ENCODE measurements at regions of chr12 and their contacts with region 1.

Region 1: GRCh38 chr12:109369831-109370230 is 22.1 kb downstream of the MYO1H start:
- DNase-seq: no peak
- H3K4me3 ChIP-seq: no peak overlapping the region
- H3K27ac ChIP-seq: no peak overlapping the region
- H3K27me3 ChIP-seq: peaks cover 3% of the 10 kb centered on the region
- CTCF ChIP-seq: no peak

Region 2: GRCh38 chr12:107992029-107992428 is 1377.8 kb before region 1 on chr12:
- CTCF ChIA-PET with region 1: interaction called, 13 read pairs
- POLR2A ChIA-PET with region 1: no interaction called
- DNase-seq: no peak
- H3K4me3 ChIP-seq: no peak overlapping the region
- H3K27ac ChIP-seq: no peak overlapping the region
- H3K27me3 ChIP-seq: no peaks in the 10 kb centered on the region
- CTCF ChIP-seq: no peak

Region 3: DNA sequence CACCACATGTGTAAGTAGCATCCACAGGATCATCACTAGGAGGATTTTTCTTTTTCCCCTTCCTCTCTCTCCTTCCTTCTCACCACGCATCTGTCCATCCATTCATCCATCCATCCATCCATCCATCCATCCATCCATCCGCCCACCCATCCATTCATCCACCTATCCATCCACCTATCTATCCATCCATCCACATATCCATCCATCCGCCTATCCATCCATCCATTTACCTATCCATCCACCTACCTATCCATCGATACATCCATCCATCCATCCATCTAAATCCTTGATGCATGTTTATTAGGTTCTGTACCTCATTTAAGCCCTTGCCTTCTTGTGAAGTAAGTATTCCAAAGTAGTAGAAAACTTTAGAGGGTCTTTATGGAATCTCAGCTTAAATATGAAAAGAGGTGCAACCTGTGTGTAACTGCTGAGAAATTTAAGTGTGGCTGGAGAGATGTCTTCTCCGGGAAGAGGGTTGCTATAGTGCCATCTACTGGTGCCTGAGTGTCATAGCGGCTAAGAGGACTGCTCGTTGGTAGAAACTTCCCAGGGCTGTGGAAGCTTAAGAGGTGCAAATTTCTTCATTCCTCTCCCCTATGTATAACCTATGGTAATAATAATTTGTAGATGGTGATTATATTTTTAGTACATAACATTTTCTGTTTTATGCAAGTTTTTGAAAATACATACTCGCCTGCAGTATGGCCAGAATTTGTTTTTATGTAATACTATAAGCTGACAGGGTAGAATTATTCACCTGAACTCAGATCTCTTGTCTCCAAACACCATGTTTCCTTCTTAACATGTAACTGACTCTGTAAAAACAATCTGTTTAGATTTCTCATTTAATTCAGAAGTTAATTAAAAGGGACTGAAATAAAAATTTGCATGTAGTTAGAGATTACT is 23.9 kb after region 1 on chr12:
- CTCF ChIA-PET with region 1: interaction called, 29 read pairs
- POLR2A ChIA-PET with region 1: no interaction called
- DNase-seq: peak; percentile 16
- H3K4me3 ChIP-seq: no peak overlapping the region
- H3K27ac ChIP-seq: no peak overlapping the region
- H3K27me3 ChIP-seq: peaks cover 2% of the 10 kb centered on the region
- CTCF ChIP-seq: peak; percentile 97

Measured in AG04450 (cell line).